K562 (cell line): ENCODE measurements at regions of chr5 and their contacts with region 1.

Region 1: GRCh38 chr5:78405829-78406750 is 45.7 kb downstream of the SCAMP1 start:
- DNase-seq: no peak
- ATAC-seq: no peak
- H3K4me3 ChIP-seq: no peak overlapping the region
- H3K27ac ChIP-seq: no peak overlapping the region
- H3K4me1 ChIP-seq: no peaks in the 10 kb centered on the region
- H3K27me3 ChIP-seq: no peaks in the 10 kb centered on the region
- CTCF ChIP-seq: no peak
- EP300 ChIP-seq: no peak
- POLR2A ChIP-seq: no peak
- RAD21 ChIP-seq: no peak

Region 2: DNA sequence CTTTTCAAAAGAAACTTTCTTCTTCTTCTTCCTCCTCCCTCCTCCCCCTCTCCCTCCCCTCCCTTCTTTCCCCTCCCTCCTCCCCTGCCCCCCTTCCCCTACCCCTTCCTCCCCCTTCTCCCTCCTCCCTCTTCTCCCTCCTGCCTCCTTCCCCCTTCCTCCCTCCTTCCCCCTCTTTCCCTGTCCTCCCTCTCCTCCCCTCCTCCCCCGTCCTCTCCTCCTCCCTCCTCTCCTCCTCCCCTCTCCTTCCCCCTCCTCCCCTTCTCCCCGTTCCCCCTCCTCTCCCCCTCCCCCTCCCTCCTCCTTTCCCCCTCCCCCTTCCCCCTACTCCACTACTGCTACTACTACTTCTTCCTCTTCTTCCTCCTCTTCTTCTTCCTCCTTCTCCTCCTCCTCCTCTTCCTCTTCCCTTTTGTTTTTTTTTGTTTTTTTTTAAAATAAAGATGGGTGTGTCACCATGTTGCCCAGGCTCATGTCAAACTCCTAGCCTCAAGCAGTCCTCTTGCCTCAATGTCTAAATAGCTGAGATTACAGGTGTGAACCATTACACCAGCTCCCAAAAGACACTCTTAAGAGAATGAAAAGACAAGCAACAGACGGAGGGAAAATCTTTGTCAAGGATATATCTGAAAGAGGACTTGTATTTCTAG is 41.8 kb after region 1 on chr5:
- CTCF ChIA-PET with region 1: no interaction called
- POLR2A ChIA-PET with region 1: no interaction called
- in situ Hi-C with region 1: loop called (anchors 5 kb)
- intact Hi-C with region 1: no loop called
- DNase-seq: no peak
- ATAC-seq: no peak
- H3K4me3 ChIP-seq: no peak overlapping the region
- H3K27ac ChIP-seq: no peak overlapping the region
- H3K4me1 ChIP-seq: no peaks in the 10 kb centered on the region
- H3K27me3 ChIP-seq: no peaks in the 10 kb centered on the region
- CTCF ChIP-seq: no peak
- EP300 ChIP-seq: no peak
- POLR2A ChIP-seq: no peak
- RAD21 ChIP-seq: no peak